Activated B cell treated with CpG ODN at 0.5 μM for 24 hours (primary cell): ENCODE measurements at regions of chr2 and their contacts with region 1.

Region 1: DNA sequence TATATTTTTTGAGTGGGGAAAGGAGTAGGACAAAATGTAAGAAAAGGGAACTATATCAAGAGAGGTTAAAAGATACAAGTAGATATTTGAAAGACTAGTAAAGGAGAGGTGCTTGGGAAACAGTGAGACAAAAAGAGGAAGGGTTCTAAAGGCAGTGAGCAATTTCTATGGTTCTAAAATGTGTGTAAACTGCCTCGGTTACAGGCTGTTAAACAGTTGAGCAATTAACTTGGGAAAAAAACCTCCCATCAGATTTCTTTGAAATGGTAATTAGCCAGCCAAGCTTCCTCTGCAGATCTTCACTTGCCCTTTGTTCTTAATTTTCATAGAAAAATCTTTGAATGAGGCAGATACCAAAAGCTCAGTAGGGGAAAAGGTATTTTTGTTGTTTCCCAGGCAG is 238.7 kb upstream of the KCNH7 start:
- DNase-seq: no peak
- ATAC-seq: no peak
- H3K4me3 Mint-ChIP-seq: no peak overlapping the region
- H3K27ac Mint-ChIP-seq: no peak overlapping the region
- H3K4me1 Mint-ChIP-seq: no peaks in the 10 kb centered on the region
- H3K27me3 Mint-ChIP-seq: no peaks in the 10 kb centered on the region
- CTCF ChIP-seq: no peak

Region 2: DNA sequence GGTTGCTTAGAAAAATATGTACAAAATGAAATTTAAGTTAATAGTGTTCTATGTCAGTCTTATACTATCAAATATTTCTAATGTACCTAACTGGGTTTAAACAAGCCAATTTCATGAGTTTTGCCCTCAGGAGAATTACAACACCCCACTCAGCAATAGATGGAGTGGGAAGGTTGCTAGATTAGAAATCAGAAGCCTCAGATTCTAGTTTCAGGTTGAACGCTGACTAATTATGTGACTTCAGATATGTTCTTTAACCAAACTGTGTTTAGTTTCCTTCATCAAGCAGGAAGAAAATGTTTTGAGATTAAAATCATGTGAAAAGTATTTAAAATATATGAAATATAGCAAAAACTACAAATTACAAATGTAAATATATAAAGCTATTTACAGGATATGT is 104.9 kb before region 1 on chr2:
- CTCF ChIA-PET with region 1: no interaction called
- POLR2A ChIA-PET with region 1: no interaction called
- intact Hi-C with region 1: no loop called
- DNase-seq: no peak
- ATAC-seq: no peak
- H3K4me3 Mint-ChIP-seq: no peak overlapping the region
- H3K27ac Mint-ChIP-seq: no peak overlapping the region
- H3K4me1 Mint-ChIP-seq: no peaks in the 10 kb centered on the region
- H3K27me3 Mint-ChIP-seq: no peaks in the 10 kb centered on the region
- CTCF ChIP-seq: no peak

Region 3: GRCh38 chr2:163028807-163029206 is 48.4 kb before region 1 on chr2:
- CTCF ChIA-PET with region 1: no interaction called
- POLR2A ChIA-PET with region 1: no interaction called
- intact Hi-C with region 1: loop called (anchors 1 kb)
- DNase-seq: no peak
- ATAC-seq: no peak
- H3K4me3 Mint-ChIP-seq: no peak overlapping the region
- H3K27ac Mint-ChIP-seq: no peak overlapping the region
- H3K4me1 Mint-ChIP-seq: no peaks in the 10 kb centered on the region
- H3K27me3 Mint-ChIP-seq: no peaks in the 10 kb centered on the region
- CTCF ChIP-seq: no peak

Region 4: DNA sequence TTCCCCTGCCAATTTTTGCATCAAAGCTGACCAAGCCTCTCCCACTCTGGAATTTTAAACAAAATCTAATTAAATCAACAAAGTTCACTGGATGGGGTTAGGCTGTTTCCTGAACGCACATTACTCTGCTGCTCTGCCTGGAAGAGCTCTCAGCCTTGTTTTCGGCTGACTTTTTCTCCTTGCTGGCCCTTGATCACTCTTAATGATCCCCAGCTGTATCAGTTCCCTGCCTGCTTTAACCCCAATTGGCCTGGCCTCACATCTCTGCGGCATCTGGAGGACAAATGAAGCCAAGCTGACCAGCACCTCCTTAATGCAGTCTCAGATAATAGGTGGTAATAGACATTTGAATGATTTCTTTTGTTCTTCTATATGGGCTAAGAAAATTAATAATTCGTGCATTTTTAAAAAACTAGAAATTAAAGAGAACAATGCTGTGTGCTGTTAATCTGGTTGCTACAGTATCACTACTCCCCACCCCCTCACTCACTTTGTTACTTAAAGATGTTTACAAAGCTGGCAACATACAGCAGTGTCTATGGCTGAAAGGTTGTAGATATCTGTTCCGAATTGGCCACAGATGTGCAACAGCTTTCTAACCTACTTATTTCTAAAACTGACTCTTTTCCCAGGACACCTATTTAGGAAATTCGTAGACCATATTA is 176.5 kb after region 1 on chr2:
- CTCF ChIA-PET with region 1: no interaction called
- POLR2A ChIA-PET with region 1: no interaction called
- intact Hi-C with region 1: no loop called
- DNase-seq: no peak
- ATAC-seq: no peak
- H3K4me3 Mint-ChIP-seq: no peak overlapping the region
- H3K27ac Mint-ChIP-seq: no peak overlapping the region
- H3K4me1 Mint-ChIP-seq: no peaks in the 10 kb centered on the region
- H3K27me3 Mint-ChIP-seq: no peaks in the 10 kb centered on the region
- CTCF ChIP-seq: no peak